B cell (primary cell): ENCODE measurements at regions of chr6 and their contacts with region 1.

Region 1: GRCh38 chr6:160534050-160534696 is 129.9 kb downstream of the LPA start:
- DNase-seq: peak; percentile 68
- ATAC-seq: peak; percentile 65
- H3K4me3 ChIP-seq: no peak overlapping the region
- H3K4me3 Mint-ChIP-seq: no peak overlapping the region
- H3K27ac ChIP-seq: no peak overlapping the region
- H3K27ac Mint-ChIP-seq: no peak overlapping the region
- H3K4me1 ChIP-seq: peaks cover 4 to 6% of the 10 kb centered on the region in 2 donors
- H3K4me1 Mint-ChIP-seq: no peaks in the 10 kb centered on the region
- H3K27me3 ChIP-seq: peaks cover 0 to 6% (median 4%) of the 10 kb centered on the region in 4 experiments
- H3K27me3 Mint-ChIP-seq: peaks cover 19% of the 10 kb centered on the region
- CTCF ChIP-seq: peak; percentile 99

Region 2: DNA sequence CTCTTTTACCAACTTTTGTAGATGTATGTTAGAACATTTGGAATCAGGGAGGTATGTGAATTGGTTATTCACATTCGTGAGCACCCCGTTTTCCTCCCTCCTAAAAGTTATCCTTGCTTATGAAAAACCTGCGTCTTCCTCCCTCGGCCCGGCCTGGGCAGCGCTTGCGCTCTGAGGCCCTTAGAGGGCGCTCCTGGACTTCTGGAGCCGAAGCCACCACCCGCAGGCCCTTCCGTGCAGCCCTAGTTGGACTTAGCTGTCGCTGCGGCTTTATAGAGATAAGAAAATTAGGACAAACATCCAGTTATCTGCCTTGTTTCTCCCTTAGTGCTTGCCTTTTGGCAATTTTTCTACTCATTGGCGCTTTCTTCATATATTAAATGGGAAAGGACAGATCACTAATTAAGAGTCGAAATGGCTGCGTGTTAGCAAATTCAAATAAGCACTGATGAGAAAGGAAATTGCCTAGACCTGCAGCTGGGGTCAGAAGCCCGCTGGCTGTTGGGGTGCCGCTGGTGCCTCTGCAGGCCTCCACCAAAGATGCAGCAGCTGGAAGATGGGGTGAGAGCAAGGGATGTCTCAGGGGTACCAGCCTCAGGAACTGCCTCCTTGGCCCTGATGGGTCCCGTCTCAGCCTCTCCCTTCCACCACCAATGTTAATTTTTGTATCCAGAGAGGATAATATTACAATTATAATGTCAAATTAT is 1359.8 kb before region 1 on chr6:
- CTCF ChIA-PET with region 1: interaction called, 4 read pairs
- POLR2A ChIA-PET with region 1: no interaction called
- intact Hi-C with region 1: loop called (anchors 5 kb)
- DNase-seq: peak; percentile 79
- ATAC-seq: peak; percentile 71
- H3K4me3 ChIP-seq: peak overlapping the region in 3 of 5 experiments; percentile 16 to 49 (median 34)
- H3K4me3 Mint-ChIP-seq: peak overlapping the region; percentile 11
- H3K27ac ChIP-seq: no peak overlapping the region
- H3K27ac Mint-ChIP-seq: no peak overlapping the region
- H3K4me1 ChIP-seq: peaks cover 14 to 15% of the 10 kb centered on the region in 2 donors
- H3K4me1 Mint-ChIP-seq: peaks cover 17% of the 10 kb centered on the region
- H3K27me3 ChIP-seq: peaks cover 0 to 48% (median 37%) of the 10 kb centered on the region in 4 experiments
- H3K27me3 Mint-ChIP-seq: peaks cover 69% of the 10 kb centered on the region
- CTCF ChIP-seq: peak; percentile 97

Region 3: GRCh38 chr6:159862103-159862502 is 672.1 kb before region 1 on chr6:
- CTCF ChIA-PET with region 1: interaction called, 34 read pairs
- POLR2A ChIA-PET with region 1: no interaction called
- intact Hi-C with region 1: no loop called
- DNase-seq: no peak
- ATAC-seq: no peak
- H3K4me3 ChIP-seq: no peak overlapping the region
- H3K4me3 Mint-ChIP-seq: no peak overlapping the region
- H3K27ac ChIP-seq: no peak overlapping the region
- H3K27ac Mint-ChIP-seq: no peak overlapping the region
- H3K4me1 ChIP-seq: no peaks in the 10 kb centered on the region
- H3K4me1 Mint-ChIP-seq: no peaks in the 10 kb centered on the region
- H3K27me3 ChIP-seq: peaks cover 0 to 7% (median 3%) of the 10 kb centered on the region in 4 experiments
- H3K27me3 Mint-ChIP-seq: peaks cover 24% of the 10 kb centered on the region
- CTCF ChIP-seq: no peak

Region 4: GRCh38 chr6:160520043-160520904 is 13.9 kb before region 1 on chr6:
- CTCF ChIA-PET with region 1: interaction called, 109 read pairs
- POLR2A ChIA-PET with region 1: interaction called, 3 read pairs
- intact Hi-C with region 1: loop called (anchors 1 kb)
- DNase-seq: peak; percentile 83
- ATAC-seq: peak; percentile 83
- H3K4me3 ChIP-seq: peak overlapping the region in 4 of 5 experiments; percentile 56 to 81 (median 70)
- H3K4me3 Mint-ChIP-seq: peak overlapping the region; percentile 95
- H3K27ac ChIP-seq: peak overlapping the region in 1 of 2 donors; percentile 61
- H3K27ac Mint-ChIP-seq: peak overlapping the region; percentile 74
- H3K4me1 ChIP-seq: peaks cover 5% of the 10 kb centered on the region in 2 donors
- H3K4me1 Mint-ChIP-seq: peaks cover 10% of the 10 kb centered on the region
- H3K27me3 ChIP-seq: no peaks in the 10 kb centered on the region
- H3K27me3 Mint-ChIP-seq: peaks cover 21% of the 10 kb centered on the region
- CTCF ChIP-seq: peak; percentile 27